Sigmoid colon (tissue), 7 donors: ENCODE measurements at regions of chr7 and their contacts with region 1.

Region 1: DNA sequence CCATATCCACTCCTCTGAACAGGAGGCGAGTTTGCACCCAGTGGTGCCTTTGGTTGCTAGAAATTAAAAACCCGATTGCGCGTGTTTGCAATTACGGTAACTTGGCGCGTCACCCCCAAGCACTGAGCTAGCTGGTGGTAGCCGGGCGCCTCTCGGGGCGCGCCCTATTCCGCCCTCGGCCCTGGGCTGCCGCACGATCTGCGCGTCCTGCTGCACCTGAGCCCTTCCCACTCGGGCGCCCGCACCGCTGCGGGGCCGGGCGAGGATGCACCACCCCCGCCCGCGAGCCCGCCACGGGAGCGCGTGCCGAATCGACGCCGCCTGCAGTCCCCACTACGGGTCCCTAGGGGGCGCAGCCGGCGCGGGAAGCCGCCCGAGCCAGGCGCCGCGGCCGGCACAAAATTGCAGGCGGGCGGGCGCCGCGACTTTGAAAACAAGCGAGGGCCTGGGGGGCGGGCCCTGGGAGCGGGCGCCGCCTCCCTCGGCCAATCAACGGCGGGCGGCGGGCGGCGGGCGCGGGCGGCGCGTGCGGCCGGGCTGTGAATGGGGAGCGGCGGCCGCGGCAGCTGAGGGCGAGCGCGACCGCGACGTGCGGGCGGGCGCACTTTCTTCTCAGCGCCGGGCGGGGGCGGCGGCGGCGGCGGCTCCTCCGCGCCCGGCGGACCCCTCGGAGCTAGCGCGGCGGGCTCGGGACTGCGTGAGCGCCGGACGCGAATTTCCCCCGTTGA is at the start of gene SDK1:
- DNase-seq: peak; percentile 94
- H3K4me3 ChIP-seq: peak within 1 kb of the TSS; percentile 52 to 91 (median 80)
- H3K27ac ChIP-seq: peak within 1 kb of the TSS; percentile 57 to 89 (median 82)
- H3K4me1 ChIP-seq: peaks cover 0 to 37% (median 24%) of the 10 kb centered on the region in 4 donors
- H3K27me3 ChIP-seq: no peaks in the 10 kb centered on the region
- CTCF ChIP-seq: peak in 3 of 4 experiments; percentile 52 to 87 (median 65)
- EP300 ChIP-seq: no peak
- POLR2A ChIP-seq: no peak
- total RNA-seq, gene SDK1: 8.2 to 23.0 (median 12.8) TPM

Region 2: GRCh38 chr7:3267966-3268690 is 32.7 kb before region 1 on chr7:
- intact Hi-C with region 1: no loop called
- DNase-seq: no peak
- H3K4me3 ChIP-seq: no peak overlapping the region
- H3K27ac ChIP-seq: peak overlapping the region in 1 of 4 donors; percentile 25
- H3K4me1 ChIP-seq: no peaks in the 10 kb centered on the region
- H3K27me3 ChIP-seq: no peaks in the 10 kb centered on the region
- CTCF ChIP-seq: no peak
- EP300 ChIP-seq: no peak
- POLR2A ChIP-seq: no peak

Region 3: DNA sequence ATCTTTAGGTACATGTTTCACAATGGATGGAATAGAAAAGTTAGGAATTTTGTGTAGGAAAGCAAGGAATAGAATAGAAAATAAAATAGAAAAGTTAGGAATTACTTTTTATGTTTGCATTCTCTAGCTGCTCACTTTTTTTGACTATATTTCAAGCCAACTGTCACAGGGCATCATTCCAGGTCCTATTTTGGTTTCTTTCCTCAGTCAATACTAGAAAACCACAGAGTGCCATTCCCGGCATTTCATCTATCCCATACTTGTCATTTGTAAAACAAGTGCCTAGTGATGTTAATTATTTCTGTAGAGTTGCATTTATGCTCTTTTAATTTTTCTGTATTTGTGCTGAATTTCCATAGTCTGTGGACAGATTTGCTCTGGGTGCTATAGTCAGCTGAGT is 66.4 kb after region 1 on chr7:
- intact Hi-C with region 1: loop called (anchors 5 kb)
- DNase-seq: no peak
- H3K4me3 ChIP-seq: no peak overlapping the region
- H3K27ac ChIP-seq: no peak overlapping the region
- H3K4me1 ChIP-seq: peaks cover 0 to 43% (median 23%) of the 10 kb centered on the region in 4 donors
- H3K27me3 ChIP-seq: no peaks in the 10 kb centered on the region
- CTCF ChIP-seq: no peak
- EP300 ChIP-seq: no peak
- POLR2A ChIP-seq: no peak

Region 4: GRCh38 chr7:3673524-3673923 is 372.7 kb after region 1 on chr7:
- intact Hi-C with region 1: loop called (anchors 5 kb)
- DNase-seq: no peak
- H3K4me3 ChIP-seq: no peak overlapping the region
- H3K27ac ChIP-seq: no peak overlapping the region
- H3K4me1 ChIP-seq: no peaks in the 10 kb centered on the region
- H3K27me3 ChIP-seq: no peaks in the 10 kb centered on the region
- CTCF ChIP-seq: no peak
- EP300 ChIP-seq: no peak
- POLR2A ChIP-seq: no peak

Region 5: DNA sequence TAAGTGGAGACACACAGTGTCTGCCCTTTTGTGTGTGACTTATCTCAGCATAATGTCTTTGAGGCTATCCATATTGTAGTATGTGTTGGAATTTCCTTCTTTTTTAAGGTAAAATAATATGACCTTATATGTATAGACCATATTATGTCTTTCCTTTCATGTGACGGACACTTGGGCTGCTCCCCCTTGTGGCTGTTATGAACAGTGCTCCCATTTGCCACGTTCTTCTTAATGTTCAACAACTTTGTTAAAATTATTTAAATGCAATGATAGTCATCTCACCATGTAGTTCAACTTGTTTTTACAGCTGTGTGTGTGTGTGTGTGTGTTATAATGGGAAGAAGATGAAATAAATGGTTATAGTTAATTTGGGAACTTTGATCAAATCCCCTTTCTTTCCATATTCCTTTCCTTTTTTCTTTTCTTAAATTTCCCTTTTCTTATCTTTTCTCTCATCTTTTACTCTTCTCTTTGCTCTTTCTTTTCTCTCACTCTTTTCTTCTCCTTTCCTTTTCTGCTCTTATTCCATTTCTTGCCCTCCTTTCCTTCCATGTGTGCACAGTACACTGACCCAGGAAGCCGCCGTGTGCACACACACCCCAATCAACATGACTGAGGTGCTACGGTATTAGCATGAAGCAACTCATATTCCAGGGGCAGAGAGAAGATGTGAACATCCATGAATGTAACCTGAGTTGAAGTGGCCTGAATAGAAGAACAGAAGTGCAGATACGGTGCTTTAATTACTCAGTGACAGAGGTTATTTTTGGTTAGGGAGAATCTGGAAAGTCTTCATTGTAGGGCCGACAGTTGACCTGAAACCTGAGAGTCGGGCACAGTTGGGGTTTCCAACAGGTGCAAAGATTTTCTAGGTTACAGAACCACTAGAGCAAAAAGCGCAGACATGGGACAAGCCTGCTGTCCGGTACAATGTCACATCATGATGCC is 596.9 kb after region 1 on chr7:
- intact Hi-C with region 1: loop called (anchors 2 kb)
- DNase-seq: no peak
- H3K4me3 ChIP-seq: no peak overlapping the region
- H3K27ac ChIP-seq: no peak overlapping the region
- H3K4me1 ChIP-seq: peaks cover 0 to 13% (median 4%) of the 10 kb centered on the region in 4 donors
- H3K27me3 ChIP-seq: no peaks in the 10 kb centered on the region
- CTCF ChIP-seq: peak; percentile 23 to 80 (median 70)
- EP300 ChIP-seq: no peak
- POLR2A ChIP-seq: no peak

Region 6: DNA sequence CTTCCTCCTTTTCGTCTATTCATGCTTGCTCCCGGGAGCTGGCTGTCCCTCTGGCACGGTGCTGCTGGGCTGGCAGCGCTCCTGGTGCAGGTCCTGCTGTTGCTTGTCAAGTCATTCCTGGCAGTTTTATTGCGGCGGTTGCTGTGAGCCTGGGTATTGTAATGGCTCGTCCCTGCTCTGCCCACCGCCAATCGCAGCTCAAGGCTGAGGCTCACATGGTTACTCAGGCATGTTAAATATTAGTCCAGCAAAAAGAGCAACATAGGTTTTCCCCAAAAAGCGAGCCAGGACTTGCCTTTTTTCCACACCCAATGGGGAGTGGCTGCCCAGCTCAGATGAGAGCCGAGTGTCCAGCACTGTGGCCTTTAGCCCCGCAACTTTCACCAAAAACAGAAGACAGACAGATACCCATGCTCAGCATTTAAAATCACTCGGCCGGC is 888.3 kb after region 1 on chr7:
- intact Hi-C with region 1: loop called (anchors 10 kb)
- DNase-seq: peak; percentile 97
- H3K4me3 ChIP-seq: peak overlapping the region in 3 of 4 donors; percentile 6 to 28 (median 16)
- H3K27ac ChIP-seq: peak overlapping the region; percentile 24 to 85 (median 78)
- H3K4me1 ChIP-seq: peaks cover 0 to 60% (median 38%) of the 10 kb centered on the region in 4 donors
- H3K27me3 ChIP-seq: no peaks in the 10 kb centered on the region
- CTCF ChIP-seq: no peak
- EP300 ChIP-seq: peak in 3 of 4 donors; percentile 71 to 88 (median 86)
- POLR2A ChIP-seq: no peak